Cardiac septum (tissue), 1 donor: ENCODE measurements at regions of chr2 and their contacts with region 1.

Region 1: DNA sequence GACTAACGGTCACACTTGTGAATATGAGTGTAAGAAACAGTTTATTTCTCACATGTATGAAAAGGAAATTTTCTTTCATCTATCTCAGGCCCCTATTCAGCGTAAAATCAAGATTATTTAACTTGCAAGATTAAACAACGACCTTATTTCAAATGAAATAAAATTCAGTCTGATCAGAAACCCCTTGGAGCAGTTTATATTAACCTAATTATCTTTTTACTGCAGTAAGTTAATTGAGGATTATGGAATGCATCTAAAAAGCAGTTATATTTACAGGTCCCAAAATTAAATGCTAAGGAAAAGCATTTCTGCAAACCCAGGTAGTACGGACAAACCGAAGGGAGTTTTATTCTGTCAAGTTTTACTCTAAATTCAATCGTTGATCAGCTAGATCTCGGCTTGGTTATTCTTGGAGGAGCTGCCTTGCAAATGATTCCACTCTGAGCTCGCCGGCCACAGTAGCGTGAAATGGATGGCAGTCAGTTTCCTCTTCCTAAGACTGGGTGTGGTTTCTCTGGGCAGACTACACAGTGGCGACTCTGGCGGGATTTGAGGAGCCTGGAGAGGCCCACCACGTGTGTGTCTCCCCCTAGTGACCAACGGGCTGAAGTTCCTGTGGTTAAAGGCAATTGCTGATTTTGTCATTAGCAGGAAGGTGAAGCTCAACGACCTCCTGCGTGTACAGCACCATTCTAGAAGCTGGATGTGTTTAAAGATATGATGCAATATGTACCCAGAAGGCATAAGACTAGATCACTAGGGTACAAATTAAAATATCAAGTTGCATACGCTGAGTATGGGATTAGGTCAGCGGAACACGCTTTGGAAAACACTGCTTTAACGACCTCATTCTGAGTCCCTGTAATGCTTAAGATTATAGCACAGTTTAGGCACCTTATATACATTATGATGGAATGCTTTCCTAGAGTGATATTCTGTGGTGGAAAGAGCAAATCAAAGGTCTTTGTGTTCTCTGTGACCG is 36.4 kb downstream of the PRKRA start:
- DNase-seq: peak; percentile 94

Region 2: GRCh38 chr2:178112202-178113152 is 302.1 kb before region 1 on chr2 and contains the start of gene RBM45:
- intact Hi-C with region 1: loop called (anchors 5 kb)
- DNase-seq: peak; percentile 94
- total RNA-seq, gene RBM45: 5.2 TPM

Region 3: DNA sequence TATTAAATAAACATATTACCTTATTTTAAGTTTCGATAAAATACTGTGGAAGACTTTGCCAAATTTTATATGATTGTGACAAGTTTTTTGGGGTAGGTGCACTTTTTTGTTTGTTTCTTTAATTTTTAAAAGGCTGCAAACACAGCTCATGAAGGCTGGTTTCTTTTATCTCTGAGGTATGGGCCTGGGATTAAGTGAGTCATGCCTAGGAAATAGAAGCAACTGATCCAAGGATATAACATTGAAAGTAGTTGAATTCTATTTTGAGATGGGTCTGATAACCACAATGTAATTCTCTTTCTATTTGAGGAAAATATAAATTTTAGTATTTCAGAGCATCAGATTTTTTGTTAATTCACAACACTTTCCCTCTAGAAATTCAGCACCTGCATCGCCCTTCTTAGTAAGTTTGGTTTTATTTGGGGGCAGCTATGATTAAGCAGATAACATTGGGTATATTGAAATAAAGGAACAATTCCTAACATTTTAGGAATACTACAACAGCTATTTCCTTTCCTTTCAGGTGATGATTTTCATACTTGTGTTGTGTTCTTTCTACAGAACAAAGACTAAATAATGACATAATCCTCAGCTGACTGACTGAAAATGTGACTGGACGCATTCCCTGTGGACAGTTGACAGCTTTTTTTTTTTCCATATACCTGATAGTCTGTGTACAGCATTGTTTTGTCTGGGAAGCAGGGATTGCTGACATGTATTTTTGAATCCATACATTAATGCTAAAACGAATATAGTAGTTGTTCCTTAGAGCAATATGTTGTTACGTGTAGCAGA is 285.5 kb before region 1 on chr2:
- intact Hi-C with region 1: loop called (anchors 2 kb)
- DNase-seq: no peak

Region 4: DNA sequence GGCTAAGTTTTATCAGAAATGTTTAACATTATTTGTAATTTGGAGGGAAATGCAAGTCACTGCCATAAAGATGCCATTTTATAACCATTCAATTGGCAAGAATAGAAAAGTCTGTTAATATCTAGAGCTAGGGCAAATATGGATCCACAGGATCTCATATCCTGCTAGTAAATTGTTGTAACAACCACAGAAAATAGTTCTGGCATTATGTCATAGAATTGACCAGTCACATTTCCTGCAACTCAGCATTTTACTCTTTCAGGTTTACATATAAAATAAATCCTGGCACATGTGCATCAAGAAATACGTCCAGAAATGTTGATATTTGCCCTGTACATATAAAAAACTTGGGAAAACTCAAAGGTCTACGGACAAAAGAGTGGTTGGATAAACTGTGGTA is 187.4 kb before region 1 on chr2:
- intact Hi-C with region 1: no loop called
- DNase-seq: no peak

Region 5: DNA sequence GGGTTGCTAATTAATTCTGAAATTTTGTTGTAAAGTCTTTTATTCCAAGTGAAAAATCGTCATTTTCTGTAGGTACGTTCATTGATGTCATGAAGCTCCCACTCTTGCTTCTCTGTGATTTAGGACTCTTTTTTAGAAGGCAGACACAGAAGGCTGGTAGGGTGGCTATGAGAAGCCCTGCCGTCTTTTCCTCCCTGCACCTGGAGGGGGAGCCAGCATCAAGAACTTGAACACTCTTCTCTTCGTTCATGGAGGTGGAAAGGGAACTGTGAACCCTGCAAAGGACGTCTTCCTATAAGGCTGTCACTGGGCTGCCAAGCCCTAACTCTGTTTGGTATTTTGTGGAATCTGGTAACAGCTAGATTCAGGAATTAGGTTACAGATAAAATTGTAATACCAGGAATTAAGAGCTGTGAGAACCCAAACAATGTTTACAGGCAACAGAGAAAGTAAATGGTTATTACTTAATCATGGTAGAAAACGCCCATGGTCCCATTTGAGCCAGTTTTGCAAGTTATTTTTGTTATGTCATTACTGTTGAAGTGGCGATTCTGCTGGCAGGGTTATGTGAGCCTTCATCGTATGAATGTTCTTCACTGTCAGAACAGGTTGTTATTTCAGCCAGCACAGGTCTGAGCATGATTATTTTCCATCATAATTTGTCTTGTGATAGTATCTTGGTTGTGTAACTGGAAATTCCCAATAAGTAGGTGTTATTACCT is 108.0 kb before region 1 on chr2:
- intact Hi-C with region 1: loop called (anchors 5 kb)
- DNase-seq: no peak

Region 6: DNA sequence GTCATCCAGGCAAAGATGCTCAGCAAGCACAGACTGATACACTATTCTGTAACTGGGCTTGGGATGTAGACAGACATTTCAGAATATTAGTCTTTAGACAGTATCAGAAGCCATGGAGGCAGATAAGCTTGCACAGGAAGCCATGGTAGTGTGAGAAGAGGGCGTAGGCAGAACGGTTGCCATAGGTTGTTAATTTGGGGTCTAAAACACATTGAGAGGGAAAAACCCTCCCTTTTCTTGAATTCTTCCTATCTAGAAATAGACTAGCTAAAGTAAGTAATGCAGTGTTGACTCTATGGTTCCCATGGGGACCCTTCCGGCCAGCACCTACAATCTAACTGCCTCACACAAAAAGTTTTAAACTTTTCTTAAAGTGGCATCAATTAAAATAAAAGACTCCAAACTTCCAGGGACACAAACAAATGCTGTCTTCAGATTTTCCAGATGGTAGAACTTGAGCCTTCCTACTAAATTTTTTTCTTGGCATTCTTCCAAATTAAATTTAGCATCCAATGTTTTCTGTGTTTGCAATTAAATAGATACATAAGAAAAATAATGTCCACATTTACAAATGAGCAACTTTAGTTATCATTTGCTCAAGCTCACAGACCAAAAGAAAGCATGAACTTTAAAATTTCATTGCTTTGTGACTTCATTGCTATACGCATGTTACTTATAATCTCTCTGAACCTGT is 34.6 kb after region 1 on chr2:
- intact Hi-C with region 1: no loop called
- DNase-seq: no peak

Region 7: DNA sequence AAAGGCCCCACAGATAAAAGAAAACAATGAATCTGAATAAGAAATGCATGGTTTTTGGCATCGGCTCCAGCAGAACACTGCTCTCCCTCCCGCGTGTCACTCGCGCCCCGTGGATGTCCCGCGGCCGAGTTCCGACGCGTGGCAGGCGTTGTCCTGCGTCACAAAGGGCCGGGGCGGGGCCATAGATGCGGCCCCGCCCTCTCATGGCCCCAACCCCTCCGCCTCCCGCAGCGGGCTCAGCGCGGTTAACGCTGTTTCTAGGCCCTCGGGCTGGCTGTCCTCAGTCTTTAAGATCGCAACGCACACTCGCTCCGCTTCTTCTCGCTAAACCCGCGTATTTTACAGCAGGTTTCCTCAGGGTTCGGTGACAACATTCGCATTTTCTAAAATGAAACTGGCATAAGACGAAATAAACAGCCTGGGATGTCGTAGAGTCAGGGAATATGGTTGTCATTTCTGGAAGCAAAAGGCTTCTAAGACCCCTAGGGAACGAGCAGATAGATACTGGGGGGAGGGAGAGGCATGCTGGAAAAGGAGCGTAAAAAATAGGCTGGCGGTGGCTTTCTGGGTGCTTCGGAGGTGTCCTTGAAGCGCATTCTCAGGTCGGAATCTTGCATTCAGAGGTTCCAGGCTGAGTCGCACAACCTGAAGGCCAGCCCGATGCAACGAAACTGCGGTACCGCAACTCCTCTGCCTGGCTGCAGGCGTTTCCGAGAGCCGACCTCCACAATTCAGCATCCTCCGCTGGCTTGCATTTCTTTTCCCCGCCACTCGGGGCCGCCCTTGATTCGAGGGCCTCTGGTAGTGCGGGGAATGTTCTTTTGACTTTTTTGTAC is 64.1 kb after region 1 on chr2 and contains the start of gene FKBP7:
- intact Hi-C with region 1: loop called (anchors 5 kb)
- DNase-seq: peak; percentile 96
- total RNA-seq, gene FKBP7: 6.5 TPM

Region 8: GRCh38 chr2:178542569-178542968 is 128.0 kb after region 1 on chr2:
- intact Hi-C with region 1: no loop called
- DNase-seq: no peak